KBM-7 (cell line): ENCODE measurements at regions of chr15 and their contacts with region 1.

Region 1: GRCh38 chr15:81265944-81266775 is 57.8 kb downstream of the STARD5 start:
- DNase-seq: peak; percentile 96

Region 2: GRCh38 chr15:80989518-80990478 is 276.4 kb before region 1 on chr15 and contains the start of gene MESD:
- in situ Hi-C with region 1: loop called (anchors 10 kb)
- DNase-seq: peak; percentile 97

Region 3: GRCh38 chr15:81106560-81106959 is 159.6 kb before region 1 on chr15:
- in situ Hi-C with region 1: loop called (anchors 10 kb)
- DNase-seq: peak; percentile 86